Heart left ventricle (tissue), 16 donors: ENCODE measurements at regions of chr7 and their contacts with region 1.

Region 1: DNA sequence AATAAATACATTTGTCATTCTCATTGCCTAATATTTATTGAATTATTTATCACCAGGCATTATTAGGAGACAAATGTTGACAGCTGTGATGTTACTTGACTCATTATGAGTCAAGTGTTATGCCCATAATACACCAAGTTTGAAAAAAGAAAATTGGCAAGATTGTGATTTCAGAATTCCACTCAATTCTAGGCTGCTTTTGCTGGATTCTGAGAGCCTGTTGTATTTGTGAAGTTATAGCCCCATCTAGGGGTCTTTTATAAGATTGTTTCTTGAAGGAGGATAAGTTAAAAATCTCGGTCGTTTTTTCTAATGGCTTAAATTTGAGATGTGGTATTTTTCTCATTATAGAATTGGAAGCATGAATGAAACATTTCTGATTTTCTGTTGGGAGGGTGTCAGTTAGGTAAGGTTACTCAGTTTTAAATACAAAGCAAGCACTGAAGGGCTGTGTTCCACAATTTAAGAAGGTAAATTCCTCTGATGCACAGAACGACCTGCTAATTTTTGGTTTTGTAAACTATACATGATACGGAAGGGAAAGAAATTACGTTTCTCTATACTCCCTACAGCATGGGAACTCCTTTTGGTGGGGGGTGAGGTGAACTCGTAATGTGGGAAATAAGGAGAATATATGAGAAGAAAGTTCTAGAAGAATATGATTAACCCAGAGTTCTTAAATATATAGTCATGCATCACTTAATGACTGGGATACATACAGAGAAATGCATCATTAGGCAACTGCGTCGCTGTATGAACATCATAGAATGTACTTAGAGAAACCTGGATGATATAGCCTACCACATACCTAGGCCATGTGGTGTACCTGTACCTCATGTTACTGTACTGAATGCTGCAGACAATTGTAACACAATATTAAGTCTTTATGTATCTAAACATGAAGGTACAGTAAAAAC is 2.6 kb downstream of the STK31 start:
- DNase-seq: no peak
- ATAC-seq: peak in 2 of 4 donors; percentile 55 to 68
- H3K4me3 ChIP-seq: no peak overlapping the region
- H3K27ac ChIP-seq: no peak overlapping the region
- H3K4me1 ChIP-seq: no peaks in the 10 kb centered on the region
- H3K27me3 ChIP-seq: no peaks in the 10 kb centered on the region
- CTCF ChIP-seq: peak; percentile 37 to 76 (median 61)
- POLR2A ChIP-seq: no peak

Region 2: GRCh38 chr7:23546897-23547572 is 165.6 kb before region 1 on chr7:
- intact Hi-C with region 1: loop called in 3 of 10 experiments (anchors 1 to 5 kb)
- DNase-seq: peak in 4 of 5 donors; percentile 45 to 65 (median 60)
- ATAC-seq: peak in 3 of 4 donors; percentile 79 to 86 (median 83)
- H3K4me3 ChIP-seq: no peak overlapping the region
- H3K27ac ChIP-seq: no peak overlapping the region
- H3K4me1 ChIP-seq: no peaks in the 10 kb centered on the region
- H3K27me3 ChIP-seq: no peaks in the 10 kb centered on the region
- CTCF ChIP-seq: peak; percentile 89 to 97 (median 94)
- POLR2A ChIP-seq: no peak

Region 3: DNA sequence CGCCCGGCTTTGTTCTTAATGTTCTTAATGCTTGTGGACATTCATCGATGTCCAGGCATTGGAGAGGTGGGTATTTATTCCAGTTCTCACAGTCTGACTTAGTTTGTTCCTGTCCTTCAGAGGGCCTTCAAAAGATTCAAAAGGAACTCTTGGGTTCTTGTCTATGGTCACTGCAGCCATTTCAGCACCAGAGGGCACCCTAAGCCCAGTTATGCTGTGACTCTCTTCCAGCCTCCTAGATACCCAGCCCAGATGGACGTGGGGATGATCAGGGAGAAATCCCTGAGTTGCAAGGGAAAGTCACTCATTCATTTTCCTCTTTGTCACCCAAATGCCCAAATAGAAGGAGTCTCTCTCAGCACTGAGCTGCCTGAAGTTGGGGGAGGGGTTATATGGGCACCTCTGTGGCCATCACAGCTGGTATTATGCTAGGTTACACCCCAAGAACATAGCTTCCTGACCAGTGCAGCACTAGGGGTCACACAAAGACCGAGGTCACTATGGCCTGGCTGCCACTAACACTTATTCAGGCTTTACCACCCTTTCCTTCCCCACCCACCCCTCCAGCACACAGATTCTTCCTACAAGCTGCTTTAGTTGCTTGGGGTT is 141.9 kb before region 1 on chr7:
- intact Hi-C with region 1: loop called (anchors 1 to 2 kb)
- DNase-seq: peak; percentile 48 to 74 (median 68)
- ATAC-seq: peak; percentile 67 to 96 (median 91)
- H3K4me3 ChIP-seq: no peak overlapping the region
- H3K27ac ChIP-seq: no peak overlapping the region
- H3K4me1 ChIP-seq: peaks cover 0 to 3% (median 0%) of the 10 kb centered on the region in 12 donors
- H3K27me3 ChIP-seq: peaks cover 0 to 17% (median 0%) of the 10 kb centered on the region in 9 donors
- CTCF ChIP-seq: peak; percentile 66 to 90 (median 84)
- POLR2A ChIP-seq: no peak